Activated naive CD4-positive, alpha-beta T cell treated with anti-CD3 and anti-CD28 coated beads for 36 hours (primary cell): ENCODE measurements at regions of chr19 and their contacts with region 1.

Region 1: GRCh38 chr19:11482384-11483050 is 1.7 kb upstream of the ELAVL3 start:
- DNase-seq: peak; percentile 90
- H3K4me3 Mint-ChIP-seq: peak overlapping the region; percentile 72
- H3K27ac Mint-ChIP-seq: peak overlapping the region; percentile 36
- H3K4me1 Mint-ChIP-seq: peaks cover 16% of the 10 kb centered on the region
- H3K27me3 Mint-ChIP-seq: peaks cover 30% of the 10 kb centered on the region

Region 2: GRCh38 chr19:11137542-11138384 is 344.8 kb before region 1 on chr19:
- CTCF ChIA-PET with region 1: no interaction called
- intact Hi-C with region 1: loop called (anchors 2 kb)
- DNase-seq: peak; percentile 70
- H3K4me3 Mint-ChIP-seq: peak overlapping the region; percentile 61
- H3K27ac Mint-ChIP-seq: no peak overlapping the region
- H3K4me1 Mint-ChIP-seq: peaks cover 10% of the 10 kb centered on the region
- H3K27me3 Mint-ChIP-seq: no peaks in the 10 kb centered on the region

Region 3: DNA sequence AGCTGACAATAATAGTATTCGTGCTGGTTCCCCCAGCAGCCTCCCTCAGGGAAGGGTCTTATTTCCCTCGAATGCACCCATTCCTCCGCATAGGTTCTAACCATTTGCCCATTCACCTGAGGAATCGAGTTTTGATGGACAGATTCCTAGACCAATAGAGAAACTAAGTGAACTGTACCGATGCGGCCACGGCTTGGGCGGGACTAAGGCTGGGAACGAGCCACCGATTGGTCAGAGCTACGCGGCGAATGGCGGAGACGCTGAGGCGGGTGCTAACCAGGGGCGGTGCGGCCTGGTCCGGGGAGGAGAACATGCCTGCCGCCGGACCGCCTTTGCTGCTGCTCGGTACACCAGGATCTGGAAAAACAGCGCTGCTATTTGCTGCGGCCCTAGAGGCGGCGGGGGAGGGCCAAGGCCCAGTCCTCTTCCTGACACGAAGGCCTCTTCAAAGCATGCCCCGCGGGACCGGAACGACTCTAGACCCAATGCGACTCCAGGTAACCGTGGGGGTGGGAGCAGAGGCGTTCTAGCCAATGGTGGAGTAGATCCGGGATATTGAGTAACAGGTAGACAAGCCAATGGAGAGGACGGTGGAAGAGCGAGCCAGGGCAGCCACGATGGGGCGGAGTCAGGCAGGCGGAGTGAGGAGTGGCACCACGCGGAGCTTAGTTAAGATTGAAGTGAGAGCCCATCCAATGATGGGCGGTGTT is 107.9 kb before region 1 on chr19 and contains the start of gene SWSAP1:
- CTCF ChIA-PET with region 1: interaction called, 14 read pairs
- intact Hi-C with region 1: loop called (anchors 1 kb)
- DNase-seq: peak; percentile 99
- H3K4me3 Mint-ChIP-seq: no peak within 1 kb of the TSS
- H3K27ac Mint-ChIP-seq: no peak within 1 kb of the TSS
- H3K4me1 Mint-ChIP-seq: peaks cover 35% of the 10 kb centered on the region
- H3K27me3 Mint-ChIP-seq: no peaks in the 10 kb centered on the region
- total RNA-seq, gene SWSAP1: 1.1 to 2.1 TPM

Region 4: DNA sequence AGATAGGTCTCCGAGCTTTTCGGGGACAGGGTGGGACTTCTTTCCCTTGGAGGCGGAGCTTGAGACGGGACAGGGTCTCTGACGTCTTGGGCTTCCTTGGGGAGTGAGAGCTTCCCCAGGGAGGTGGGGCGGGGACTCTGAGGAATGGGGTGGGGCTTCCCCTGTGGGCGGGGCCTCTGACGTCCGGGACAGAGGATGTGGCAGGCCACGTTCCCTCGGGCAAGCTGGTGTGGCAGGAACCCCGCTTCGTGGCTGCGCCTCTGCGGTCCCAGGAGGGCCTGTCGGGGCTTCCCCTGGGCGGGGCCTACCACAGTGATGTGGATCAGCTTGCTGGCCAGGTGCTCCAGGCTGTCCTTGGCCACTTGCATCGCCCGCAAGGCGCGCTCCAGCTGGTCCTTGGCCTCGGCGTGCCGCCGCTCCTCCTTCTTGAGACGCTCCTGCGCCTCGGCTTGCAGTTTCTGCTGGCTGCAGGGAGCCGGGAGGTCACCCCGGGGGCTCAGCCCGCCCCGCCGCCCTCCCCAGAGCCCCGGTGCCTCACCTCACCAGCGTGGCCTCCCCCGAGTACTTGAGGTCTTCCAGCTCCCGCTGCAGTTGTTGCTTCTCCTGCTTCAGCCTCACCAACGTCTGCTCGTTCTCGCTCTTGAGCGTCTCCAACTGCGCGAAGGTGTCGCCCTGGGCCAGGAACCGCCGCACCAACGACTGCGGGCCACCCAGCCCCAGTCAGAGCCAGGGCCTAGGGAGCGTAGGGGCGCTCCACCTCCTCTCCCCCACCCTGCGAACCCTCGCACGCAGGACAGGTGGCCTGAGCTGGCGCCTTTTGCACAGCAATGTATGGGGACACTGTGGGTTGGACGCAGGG is 60.1 kb before region 1 on chr19:
- CTCF ChIA-PET with region 1: interaction called, 3 read pairs
- intact Hi-C with region 1: loop called (anchors 2 kb)
- DNase-seq: peak; percentile 87
- H3K4me3 Mint-ChIP-seq: peak overlapping the region; percentile 65
- H3K27ac Mint-ChIP-seq: no peak overlapping the region
- H3K4me1 Mint-ChIP-seq: peaks cover 41% of the 10 kb centered on the region
- H3K27me3 Mint-ChIP-seq: peaks cover 57% of the 10 kb centered on the region

Region 5: DNA sequence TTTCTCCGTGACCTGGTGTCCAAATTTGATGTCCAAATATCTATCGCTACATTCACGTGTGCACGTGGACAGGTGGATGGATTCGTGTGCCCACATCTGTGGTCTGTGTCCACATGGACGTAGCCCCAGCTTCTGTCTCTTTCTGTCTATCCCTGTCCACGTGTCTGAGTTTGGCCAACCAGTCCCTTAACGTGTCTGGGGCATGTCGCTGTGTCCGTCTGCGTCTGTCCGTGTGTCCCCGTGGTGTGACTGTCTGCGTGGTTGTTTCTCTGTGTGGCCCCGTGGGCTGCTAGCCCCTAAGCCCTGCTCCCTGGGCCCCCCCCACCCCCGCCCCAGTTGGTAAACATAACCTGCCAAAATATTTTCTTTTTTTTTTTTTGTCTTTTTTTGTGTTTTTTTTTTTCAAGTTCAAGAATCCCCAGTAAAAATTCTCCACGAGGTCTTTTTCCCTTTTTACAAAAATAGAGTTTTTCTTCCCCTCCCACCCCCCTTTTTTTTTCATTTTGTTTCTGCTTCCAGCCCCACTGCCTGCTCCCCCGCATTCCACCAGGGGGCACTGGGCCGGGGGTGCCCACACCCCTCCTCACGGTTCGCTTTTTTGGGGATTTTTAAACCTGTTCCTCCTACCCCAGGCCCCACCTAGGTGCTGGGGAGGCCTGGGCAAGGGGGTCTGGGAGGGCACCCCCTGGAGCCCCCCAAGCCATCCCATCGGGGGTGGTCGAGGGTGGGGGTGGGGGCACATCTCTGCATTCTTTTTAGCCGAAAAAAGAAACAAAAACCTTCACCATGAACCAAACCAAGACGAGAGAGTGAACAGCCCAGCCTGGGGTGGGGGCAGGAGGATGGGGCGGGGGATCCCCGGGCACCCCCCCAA is 28.8 kb before region 1 on chr19:
- CTCF ChIA-PET with region 1: interaction called, 7 read pairs
- intact Hi-C with region 1: loop called (anchors 2 kb)
- DNase-seq: peak; percentile 15
- H3K4me3 Mint-ChIP-seq: no peak overlapping the region
- H3K27ac Mint-ChIP-seq: no peak overlapping the region
- H3K4me1 Mint-ChIP-seq: no peaks in the 10 kb centered on the region
- H3K27me3 Mint-ChIP-seq: no peaks in the 10 kb centered on the region

Region 6: GRCh38 chr19:11505032-11505503 is 22.6 kb after region 1 on chr19:
- CTCF ChIA-PET with region 1: interaction called, 10 read pairs
- intact Hi-C with region 1: loop called (anchors 1 kb)
- DNase-seq: peak; percentile 95
- H3K4me3 Mint-ChIP-seq: peak overlapping the region; percentile 86
- H3K27ac Mint-ChIP-seq: peak overlapping the region; percentile 36
- H3K4me1 Mint-ChIP-seq: peaks cover 15% of the 10 kb centered on the region
- H3K27me3 Mint-ChIP-seq: no peaks in the 10 kb centered on the region